AG04449 (cell line): ENCODE measurements at regions of chr12 and their contacts with region 1.

Region 1: DNA sequence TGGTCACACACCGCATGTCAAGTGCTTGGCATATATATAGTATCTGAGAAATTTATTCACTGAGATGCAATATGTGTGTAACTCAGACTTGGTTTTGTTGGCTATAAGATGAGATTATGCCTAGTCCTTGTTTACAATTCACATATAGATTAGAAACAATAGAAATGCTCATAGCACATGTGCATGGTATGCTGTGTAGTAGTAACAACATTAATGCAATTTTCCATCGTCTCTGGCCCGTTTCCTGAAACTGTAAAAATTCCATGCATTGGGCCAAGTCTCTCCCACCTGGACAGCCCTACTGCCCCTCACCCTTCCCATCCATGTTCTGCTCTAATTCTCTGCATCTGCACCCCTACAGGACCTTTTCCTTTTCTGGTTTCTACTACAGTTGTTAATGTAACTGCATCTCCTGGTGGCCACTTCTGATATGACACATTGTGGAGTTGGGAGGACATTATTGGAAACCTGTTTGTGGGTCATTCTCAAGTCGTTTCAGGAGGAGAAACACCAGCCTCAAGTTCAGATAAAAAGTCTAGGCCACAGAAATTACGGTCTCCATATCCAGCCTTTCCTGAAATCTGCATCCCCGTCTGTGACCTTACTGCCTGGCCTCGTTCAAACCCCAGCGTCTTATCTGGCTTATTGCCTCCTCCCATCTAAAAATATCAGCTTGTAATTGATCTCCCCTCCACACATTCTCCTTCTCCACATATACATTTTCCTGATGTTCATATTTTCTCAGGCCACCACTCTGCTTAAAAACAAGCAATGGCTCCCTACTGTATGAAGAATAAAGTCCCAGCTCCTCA is 37.5 kb downstream of the EMP1 start:
- DNase-seq: no peak
- H3K4me3 ChIP-seq: no peak overlapping the region
- CTCF ChIP-seq: peak; percentile 80

Region 2: GRCh38 chr12:12983420-12984035 is 250.5 kb before region 1 on chr12:
- CTCF ChIA-PET with region 1: interaction called, 15 read pairs
- POLR2A ChIA-PET with region 1: no interaction called
- DNase-seq: no peak
- H3K4me3 ChIP-seq: no peak overlapping the region
- CTCF ChIP-seq: peak; percentile 69

Region 3: GRCh38 chr12:13023811-13024530 is 210.1 kb before region 1 on chr12:
- CTCF ChIA-PET with region 1: interaction called, 17 read pairs
- POLR2A ChIA-PET with region 1: no interaction called
- DNase-seq: no peak
- H3K4me3 ChIP-seq: no peak overlapping the region
- CTCF ChIP-seq: peak; percentile 48

Region 4: GRCh38 chr12:13223179-13223859 is 10.7 kb before region 1 on chr12:
- CTCF ChIA-PET with region 1: interaction called, 18 read pairs
- POLR2A ChIA-PET with region 1: no interaction called
- DNase-seq: peak; percentile 77
- H3K4me3 ChIP-seq: no peak overlapping the region
- CTCF ChIP-seq: no peak

Region 5: GRCh38 chr12:13250416-13250815 is 16.4 kb after region 1 on chr12:
- CTCF ChIA-PET with region 1: interaction called, 18 read pairs
- POLR2A ChIA-PET with region 1: no interaction called
- DNase-seq: peak; percentile 19
- H3K4me3 ChIP-seq: no peak overlapping the region
- CTCF ChIP-seq: no peak